ENCODE measurements at regions of chr1 and their contacts with region 1.

Region 1: DNA sequence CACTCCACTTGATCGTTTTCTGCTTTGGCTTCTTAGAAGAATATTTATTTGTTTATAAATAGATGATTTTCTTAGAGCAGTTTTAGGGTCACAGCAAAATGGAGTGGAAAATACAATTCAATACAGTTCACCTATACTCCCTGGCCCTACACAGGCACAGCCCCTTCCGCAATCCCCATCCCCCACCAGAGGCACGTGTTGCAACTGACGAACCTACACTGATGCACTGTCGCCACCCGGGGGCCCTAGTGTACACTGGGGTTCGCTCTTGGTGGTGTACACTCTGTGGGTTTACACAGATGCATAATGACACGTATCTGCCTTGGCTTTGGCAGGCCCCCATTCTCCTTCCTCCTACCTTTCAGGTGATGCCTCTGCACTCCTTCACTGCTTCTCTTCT is 8.0 kb downstream of the ECHDC2 start:
- DNase-seq: no peak
- H3K4me3 ChIP-seq: no peak overlapping the region
- H3K27ac ChIP-seq: no peak overlapping the region
- H3K4me1 ChIP-seq: peaks cover 0 to 12% of the 10 kb centered on the region in 2 donors
- H3K27me3 ChIP-seq: no peaks in the 10 kb centered on the region
- CTCF ChIP-seq: no peak
- POLR2A ChIP-seq: no peak

Region 2: DNA sequence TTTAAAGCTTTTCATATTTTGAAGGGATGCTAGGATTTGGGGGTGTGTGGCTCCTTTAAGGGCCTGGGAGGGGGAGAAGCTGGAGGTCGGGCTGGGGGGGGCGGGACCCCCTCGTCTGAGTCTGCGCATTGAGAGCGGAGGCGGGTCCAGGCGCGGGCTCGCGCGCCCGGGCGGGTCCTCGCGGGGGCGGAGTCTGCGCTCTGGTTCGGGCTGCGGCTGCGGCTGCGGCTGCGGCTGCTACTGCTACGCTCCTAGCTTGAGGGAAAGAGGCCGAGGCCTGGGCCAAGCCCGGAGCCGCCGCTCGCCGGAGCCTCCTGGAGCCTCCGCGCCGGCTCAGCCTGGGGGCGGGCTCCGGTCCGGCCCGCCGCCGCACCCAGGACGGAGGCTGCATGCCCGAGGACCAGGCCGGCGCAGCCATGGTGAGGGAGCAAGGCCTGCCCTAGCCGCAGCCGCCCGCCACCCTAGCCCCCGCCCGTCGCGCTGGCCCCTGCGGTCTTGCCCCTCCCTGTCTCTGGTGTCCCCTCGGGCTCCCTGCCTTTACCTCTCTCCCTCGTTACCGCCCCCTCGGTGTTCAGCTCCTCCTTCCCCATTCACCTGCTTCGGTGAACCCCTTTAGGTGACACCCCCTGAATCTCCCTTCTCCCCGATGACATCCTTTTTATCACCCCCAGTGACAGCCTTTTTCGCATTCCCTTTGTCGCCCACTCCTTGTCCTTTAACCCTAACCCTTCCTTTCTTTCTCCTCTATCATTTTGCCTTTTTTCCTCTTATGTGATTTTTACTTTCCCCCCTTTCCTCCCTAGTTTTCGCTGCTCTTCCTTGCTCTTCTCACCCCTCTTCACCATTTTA is 187.0 kb before region 1 on chr1 and contains the start of gene ZYG11B:
- intact Hi-C with region 1: loop called (anchors 10 kb)
- DNase-seq: peak; percentile 89
- H3K4me3 ChIP-seq: peak within 1 kb of the TSS; percentile 38 to 94 (median 71)
- H3K27ac ChIP-seq: peak within 1 kb of the TSS; percentile 59 to 90 (median 80)
- H3K4me1 ChIP-seq: peaks cover 14 to 23% of the 10 kb centered on the region in 2 donors
- H3K27me3 ChIP-seq: no peaks in the 10 kb centered on the region
- CTCF ChIP-seq: peak in 1 of 6 experiments; percentile 8
- POLR2A ChIP-seq: peak in 1 of 2 donors; percentile 92
- total RNA-seq, gene ZYG11B: 64.8 to 88.2 (median 82.2) TPM

Region 3: DNA sequence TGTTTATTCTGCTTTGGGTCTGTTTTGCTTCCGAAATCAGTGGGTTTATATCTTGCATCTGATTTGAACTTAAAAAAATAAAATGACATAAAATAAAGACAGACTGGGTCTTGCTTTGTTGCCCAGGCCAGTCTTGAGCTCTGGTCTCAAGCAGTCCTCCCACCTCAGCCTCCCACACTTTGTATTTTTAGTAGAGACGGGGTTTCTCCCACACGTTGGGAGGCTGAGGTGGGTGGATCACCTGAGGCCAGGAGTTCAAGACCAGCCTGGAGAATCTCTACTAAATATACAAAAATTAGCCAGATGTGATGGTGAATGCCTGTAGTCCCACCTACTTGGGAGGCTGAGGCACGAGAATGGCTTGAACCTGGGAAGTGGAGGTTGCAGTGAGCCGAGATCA is 65.1 kb before region 1 on chr1:
- intact Hi-C with region 1: loop called (anchors 5 kb)
- DNase-seq: no peak
- H3K4me3 ChIP-seq: no peak overlapping the region
- H3K27ac ChIP-seq: no peak overlapping the region
- H3K4me1 ChIP-seq: peaks cover 0 to under 1% of the 10 kb centered on the region in 2 donors
- H3K27me3 ChIP-seq: no peaks in the 10 kb centered on the region
- CTCF ChIP-seq: no peak
- POLR2A ChIP-seq: no peak

Region 4: GRCh38 chr1:53025034-53025768 is 111.7 kb after region 1 on chr1:
- intact Hi-C with region 1: no loop called
- DNase-seq: peak; percentile 6 to 17
- H3K4me3 ChIP-seq: no peak overlapping the region
- H3K27ac ChIP-seq: peak overlapping the region in 2 of 3 donors; percentile 34 to 52
- H3K4me1 ChIP-seq: peaks cover 0 to 10% of the 10 kb centered on the region in 2 donors
- H3K27me3 ChIP-seq: no peaks in the 10 kb centered on the region
- CTCF ChIP-seq: no peak
- POLR2A ChIP-seq: no peak